IMR-90 (cell line): ENCODE measurements at regions of chr3 and their contacts with region 1.

Region 1: DNA sequence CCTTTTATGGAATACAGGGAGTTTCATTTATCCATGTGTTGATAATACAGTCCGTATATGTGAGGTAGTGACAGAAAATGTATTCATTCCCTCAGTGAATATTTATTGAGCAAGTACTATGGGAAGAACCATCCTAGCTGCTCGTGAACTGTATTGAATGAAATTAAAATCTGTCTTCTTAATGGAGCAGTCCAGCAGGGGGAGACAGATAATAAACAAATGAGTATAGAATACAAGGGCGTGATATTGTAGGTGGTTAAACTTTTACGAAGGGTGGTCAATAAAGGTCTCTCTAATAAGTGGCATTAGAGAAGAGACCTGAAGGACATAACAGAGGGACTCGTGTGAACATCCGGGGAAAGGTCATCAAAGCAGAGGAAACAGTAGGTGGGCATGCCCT is 62.7 kb upstream of the OSTN start:
- DNase-seq: peak; percentile 18
- ATAC-seq: peak; percentile 49; the same call in 1 of the 2 replicates
- H3K4me3 ChIP-seq: no peak overlapping the region
- H3K27ac ChIP-seq: no peak overlapping the region
- H3K4me1 ChIP-seq: no peaks in the 10 kb centered on the region
- H3K27me3 ChIP-seq: no peaks in the 10 kb centered on the region
- CTCF ChIP-seq: peak; percentile 44
- POLR2A ChIP-seq: no peak
- RAD21 ChIP-seq: peak; percentile 46; the same call in 1 of the 2 replicates

Region 2: DNA sequence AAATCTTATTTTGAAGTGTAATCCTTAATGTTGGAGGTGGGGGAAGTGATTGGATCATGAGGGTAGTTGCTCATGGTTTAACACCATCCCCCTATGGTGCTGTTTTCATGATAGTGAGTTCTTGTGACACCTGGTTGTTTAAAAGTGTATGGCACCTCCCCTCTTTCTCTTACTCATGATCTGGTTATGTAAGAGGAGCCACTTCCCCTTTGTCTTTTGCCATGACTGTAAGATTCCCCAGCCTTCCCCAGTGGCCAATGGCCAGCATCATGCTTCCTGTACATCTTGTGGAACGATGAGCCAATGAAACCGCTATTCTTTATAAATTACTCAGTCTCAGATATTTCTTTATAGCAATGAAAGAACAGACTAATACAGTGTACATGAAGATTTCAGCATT is 234.1 kb before region 1 on chr3:
- CTCF ChIA-PET with region 1: no interaction called
- POLR2A ChIA-PET with region 1: no interaction called
- dilution Hi-C with region 1: no loop called
- in situ Hi-C with region 1: no loop called
- intact Hi-C with region 1: no loop called
- DNase-seq: no peak
- ATAC-seq: no peak
- H3K4me3 ChIP-seq: no peak overlapping the region
- H3K27ac ChIP-seq: no peak overlapping the region
- H3K4me1 ChIP-seq: no peaks in the 10 kb centered on the region
- H3K27me3 ChIP-seq: no peaks in the 10 kb centered on the region
- CTCF ChIP-seq: no peak
- POLR2A ChIP-seq: no peak
- RAD21 ChIP-seq: no peak

Region 3: DNA sequence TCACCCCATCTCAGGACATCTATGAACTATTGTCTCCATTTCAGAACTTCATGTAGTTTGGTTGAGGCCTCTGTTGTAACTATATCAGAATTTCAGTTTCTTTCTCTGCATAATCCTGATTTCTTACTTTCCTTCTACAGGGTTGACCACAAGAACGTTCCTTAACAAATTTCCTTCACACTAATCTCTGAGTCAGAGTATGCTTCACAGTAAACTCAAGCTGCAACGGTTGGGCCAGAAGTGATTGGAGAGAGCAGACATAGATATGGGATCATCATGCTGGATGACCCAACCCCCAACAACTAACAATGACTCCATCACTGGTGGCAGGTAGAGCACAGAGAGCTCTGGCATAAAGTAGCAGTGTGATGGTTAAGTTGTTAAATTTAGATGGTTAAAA is 66.1 kb before region 1 on chr3:
- CTCF ChIA-PET with region 1: no interaction called
- POLR2A ChIA-PET with region 1: no interaction called
- dilution Hi-C with region 1: no loop called
- in situ Hi-C with region 1: no loop called
- intact Hi-C with region 1: loop called (anchors 2 kb)
- DNase-seq: peak; percentile 95
- ATAC-seq: peak; percentile 88
- H3K4me3 ChIP-seq: no peak overlapping the region
- H3K27ac ChIP-seq: peak overlapping the region; percentile 61; the same call in 1 of the 2 replicates
- H3K4me1 ChIP-seq: peaks cover 17% of the 10 kb centered on the region; the same call in 1 of the 2 replicates
- H3K27me3 ChIP-seq: no peaks in the 10 kb centered on the region
- CTCF ChIP-seq: no peak
- POLR2A ChIP-seq: no peak
- RAD21 ChIP-seq: no peak

Region 4: GRCh38 chr3:191412759-191413158 is 276.4 kb after region 1 on chr3:
- CTCF ChIA-PET with region 1: no interaction called
- POLR2A ChIA-PET with region 1: no interaction called
- dilution Hi-C with region 1: no loop called
- in situ Hi-C with region 1: no loop called
- intact Hi-C with region 1: loop called (anchors 10 kb)
- DNase-seq: peak; percentile 97
- ATAC-seq: peak; percentile 90
- H3K4me3 ChIP-seq: no peak overlapping the region; the same call in 1 of the 2 replicates
- H3K27ac ChIP-seq: no peak overlapping the region
- H3K4me1 ChIP-seq: peaks cover 3% of the 10 kb centered on the region; the same call in 1 of the 2 replicates
- H3K27me3 ChIP-seq: no peaks in the 10 kb centered on the region
- CTCF ChIP-seq: no peak
- POLR2A ChIP-seq: no peak
- RAD21 ChIP-seq: no peak